GM12878 (cell line): ENCODE measurements at regions of chr5 and their contacts with region 1.

Region 1: GRCh38 chr5:41903892-41904799 is at the start of gene RIMOC1:
- DNase-seq: peak; percentile 98
- ATAC-seq: peak; percentile 99
- H3K4me3 ChIP-seq: peak within 1 kb of the TSS; percentile 86
- H3K27ac ChIP-seq: peak within 1 kb of the TSS; percentile 69
- H3K4me1 ChIP-seq: peaks cover 5% of the 10 kb centered on the region
- H3K27me3 ChIP-seq: no peaks in the 10 kb centered on the region
- CTCF ChIP-seq: no peak
- EP300 ChIP-seq: peak; percentile 29 to 59; a peak in 3 of 4 replicates
- POLR2A ChIP-seq: peak; percentile 98
- RAD21 ChIP-seq: no peak
- polyA plus RNA-seq, gene RIMOC1: 3.9 to 10.5 TPM

Region 2: DNA sequence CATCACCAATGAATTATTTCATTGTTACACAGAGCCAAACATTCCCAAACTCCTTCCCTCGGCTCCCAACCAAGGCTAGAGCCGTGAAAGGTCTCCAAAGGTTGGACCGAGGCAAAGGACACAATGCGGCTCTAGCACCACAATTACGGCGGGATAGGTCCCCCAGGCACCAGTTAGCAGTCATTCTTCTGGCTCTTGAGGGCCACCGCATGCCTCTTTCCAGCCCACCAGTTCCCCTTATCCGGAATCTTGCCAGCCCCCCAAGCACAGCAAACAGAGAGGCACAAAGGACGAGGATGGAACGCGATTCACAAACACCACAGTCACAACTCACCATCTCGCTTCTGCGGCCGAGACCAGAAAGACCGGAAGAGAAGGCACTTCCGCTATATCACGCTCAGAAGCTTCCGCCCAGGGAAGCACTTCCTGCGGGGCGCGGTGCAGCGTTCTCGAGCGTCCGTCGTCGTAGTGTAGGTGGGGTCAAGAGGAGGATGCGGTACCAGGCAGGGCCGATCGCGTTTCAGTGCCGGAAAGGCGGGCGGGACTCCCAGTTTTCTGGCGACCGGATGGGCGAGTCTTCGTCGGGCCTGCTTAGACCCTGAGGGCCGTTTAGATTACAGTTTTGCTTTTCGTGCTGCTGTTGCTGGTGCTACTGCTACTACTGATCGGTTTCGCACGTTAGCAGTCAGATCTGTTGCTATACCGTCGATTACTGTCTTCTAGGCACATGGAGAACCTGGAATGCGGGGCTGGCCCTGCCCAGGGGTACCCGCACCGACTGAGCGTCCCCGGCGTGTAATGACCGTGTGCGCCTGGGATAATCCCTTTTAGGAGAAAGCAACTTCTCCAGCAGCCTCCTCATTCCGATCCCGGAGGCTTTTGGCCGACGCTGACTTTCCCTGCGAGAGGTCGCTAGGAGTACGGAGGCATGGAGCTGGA is 1069.0 kb before region 1 on chr5 and contains the start of gene RPL37:
- CTCF ChIA-PET with region 1: no interaction called
- POLR2A ChIA-PET with region 1: no interaction called
- RAD21 ChIA-PET with region 1: no interaction called
- SMC1A ChIA-PET with region 1: no interaction called
- in situ Hi-C with region 1: loop called (anchors 5 kb)
- intact Hi-C with region 1: no loop called
- DNase-seq: peak; percentile 87
- ATAC-seq: peak; percentile 92
- H3K4me3 ChIP-seq: peak within 1 kb of the TSS; percentile 92
- H3K27ac ChIP-seq: peak within 1 kb of the TSS; percentile 97
- H3K4me1 ChIP-seq: peaks cover 11% of the 10 kb centered on the region
- H3K27me3 ChIP-seq: no peaks in the 10 kb centered on the region
- CTCF ChIP-seq: no peak
- EP300 ChIP-seq: no peak
- POLR2A ChIP-seq: peak; percentile 99
- RAD21 ChIP-seq: no peak
- polyA plus RNA-seq, gene RPL37: 2,699 to 2,779 TPM

Region 3: GRCh38 chr5:40866291-40866690 is 1037.9 kb before region 1 on chr5:
- CTCF ChIA-PET with region 1: no interaction called
- POLR2A ChIA-PET with region 1: no interaction called
- RAD21 ChIA-PET with region 1: no interaction called
- SMC1A ChIA-PET with region 1: no interaction called
- in situ Hi-C with region 1: no loop called
- intact Hi-C with region 1: no loop called
- DNase-seq: no peak
- ATAC-seq: no peak
- H3K4me3 ChIP-seq: no peak overlapping the region
- H3K27ac ChIP-seq: no peak overlapping the region
- H3K4me1 ChIP-seq: no peaks in the 10 kb centered on the region
- H3K27me3 ChIP-seq: no peaks in the 10 kb centered on the region; a peak in 1 of 4 replicates
- CTCF ChIP-seq: no peak
- EP300 ChIP-seq: no peak
- POLR2A ChIP-seq: no peak
- RAD21 ChIP-seq: no peak

Region 4: DNA sequence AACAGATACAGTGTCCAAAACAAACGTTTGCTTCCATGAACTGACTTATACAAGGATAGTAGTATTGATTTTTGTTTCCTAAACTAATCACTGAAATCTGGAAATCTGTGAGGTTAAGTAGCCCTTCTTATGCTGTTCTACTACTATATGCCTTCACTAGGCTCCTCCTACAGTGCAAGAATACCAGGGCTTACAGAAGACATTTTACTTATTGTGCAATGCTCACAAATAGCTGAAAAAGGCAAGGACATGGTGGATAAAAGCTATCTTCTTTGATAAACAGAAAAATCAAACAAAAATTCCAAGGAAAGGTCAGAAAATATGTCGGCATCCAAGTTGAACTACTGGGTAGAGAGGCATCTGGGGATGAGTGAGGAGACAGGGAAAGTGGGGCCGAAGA is 95.9 kb before region 1 on chr5:
- CTCF ChIA-PET with region 1: no interaction called
- POLR2A ChIA-PET with region 1: no interaction called
- RAD21 ChIA-PET with region 1: no interaction called
- SMC1A ChIA-PET with region 1: no interaction called
- in situ Hi-C with region 1: no loop called
- intact Hi-C with region 1: no loop called
- DNase-seq: no peak
- ATAC-seq: no peak
- H3K4me3 ChIP-seq: no peak overlapping the region
- H3K27ac ChIP-seq: no peak overlapping the region
- H3K4me1 ChIP-seq: no peaks in the 10 kb centered on the region
- H3K27me3 ChIP-seq: no peaks in the 10 kb centered on the region
- CTCF ChIP-seq: no peak
- EP300 ChIP-seq: no peak
- POLR2A ChIP-seq: no peak
- RAD21 ChIP-seq: no peak

Region 5: DNA sequence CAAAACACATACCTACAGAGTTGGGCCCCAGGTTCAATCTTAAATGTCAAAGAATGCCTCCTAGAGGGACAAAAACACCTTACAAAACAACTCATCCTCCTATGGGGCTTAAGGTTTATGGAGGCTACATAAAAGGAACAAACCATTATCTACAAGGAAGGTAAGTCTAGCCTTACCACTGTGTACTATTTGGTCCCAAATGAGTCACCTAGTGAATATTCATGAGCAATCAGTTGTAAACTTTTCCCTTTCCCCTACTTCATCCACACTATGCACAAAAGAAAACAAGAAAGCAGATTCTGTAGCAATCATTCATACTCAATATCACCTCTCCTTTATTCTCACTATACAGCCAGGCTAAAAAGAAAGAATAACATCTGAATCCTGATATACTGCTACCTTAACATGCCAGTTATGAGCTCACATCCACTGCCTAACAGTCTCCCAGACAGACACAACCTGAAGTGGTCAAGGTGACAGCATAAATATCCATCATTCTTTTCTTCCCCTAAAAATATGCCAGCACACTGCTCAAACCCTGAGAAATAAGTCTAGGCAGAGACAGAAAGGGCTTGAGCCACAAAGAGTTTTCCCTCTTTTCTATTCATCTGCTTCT is 40.2 kb before region 1 on chr5:
- CTCF ChIA-PET with region 1: no interaction called
- POLR2A ChIA-PET with region 1: no interaction called
- RAD21 ChIA-PET with region 1: interaction called, 5 read pairs
- SMC1A ChIA-PET with region 1: interaction called, 16 read pairs
- in situ Hi-C with region 1: no loop called
- intact Hi-C with region 1: no loop called
- DNase-seq: no peak
- ATAC-seq: peak; percentile 81
- H3K4me3 ChIP-seq: no peak overlapping the region
- H3K27ac ChIP-seq: no peak overlapping the region
- H3K4me1 ChIP-seq: no peaks in the 10 kb centered on the region; the same call in 1 of the 2 replicates
- H3K27me3 ChIP-seq: no peaks in the 10 kb centered on the region
- CTCF ChIP-seq: no peak
- EP300 ChIP-seq: no peak
- POLR2A ChIP-seq: no peak
- RAD21 ChIP-seq: no peak

Region 6: GRCh38 chr5:41869739-41870626 is 34.2 kb before region 1 on chr5 and contains the start of gene OXCT1:
- CTCF ChIA-PET with region 1: no interaction called
- POLR2A ChIA-PET with region 1: interaction called, 5 read pairs
- RAD21 ChIA-PET with region 1: interaction called, 5 read pairs
- SMC1A ChIA-PET with region 1: interaction called, 16 read pairs
- in situ Hi-C with region 1: no loop called
- intact Hi-C with region 1: loop called (anchors 1 kb)
- DNase-seq: peak; percentile 45
- ATAC-seq: peak; percentile 95
- H3K4me3 ChIP-seq: peak within 1 kb of the TSS; percentile 79
- H3K27ac ChIP-seq: peak within 1 kb of the TSS; percentile 89
- H3K4me1 ChIP-seq: peaks cover 6% of the 10 kb centered on the region
- H3K27me3 ChIP-seq: no peaks in the 10 kb centered on the region
- CTCF ChIP-seq: no peak
- EP300 ChIP-seq: no peak
- POLR2A ChIP-seq: peak; percentile 98
- RAD21 ChIP-seq: no peak
- polyA plus RNA-seq, gene OXCT1: 46.9 to 61.3 TPM

Region 7: GRCh38 chr5:41924872-41925554 is 20.9 kb after region 1 on chr5 and contains the start of gene FBXO4:
- CTCF ChIA-PET with region 1: interaction called, 5 read pairs
- POLR2A ChIA-PET with region 1: interaction called, 11 read pairs
- RAD21 ChIA-PET with region 1: interaction called, 7 read pairs
- SMC1A ChIA-PET with region 1: interaction called, 4 read pairs
- in situ Hi-C with region 1: no loop called
- intact Hi-C with region 1: loop called (anchors 1 kb)
- DNase-seq: peak; percentile 63
- ATAC-seq: peak; percentile 96
- H3K4me3 ChIP-seq: peak within 1 kb of the TSS; percentile 84
- H3K27ac ChIP-seq: peak within 1 kb of the TSS; percentile 97
- H3K4me1 ChIP-seq: peaks cover 21% of the 10 kb centered on the region
- H3K27me3 ChIP-seq: no peaks in the 10 kb centered on the region
- CTCF ChIP-seq: peak; percentile 58 to 82 (median 74)
- EP300 ChIP-seq: no peak; a peak in 1 of 4 replicates
- POLR2A ChIP-seq: peak; percentile 96
- RAD21 ChIP-seq: peak; percentile 47; the same call in 1 of the 2 replicates
- polyA plus RNA-seq, gene FBXO4: 7.2 to 13.8 TPM